ENCODE measurements at regions of chr2 and their contacts with region 1.

Region 1: DNA sequence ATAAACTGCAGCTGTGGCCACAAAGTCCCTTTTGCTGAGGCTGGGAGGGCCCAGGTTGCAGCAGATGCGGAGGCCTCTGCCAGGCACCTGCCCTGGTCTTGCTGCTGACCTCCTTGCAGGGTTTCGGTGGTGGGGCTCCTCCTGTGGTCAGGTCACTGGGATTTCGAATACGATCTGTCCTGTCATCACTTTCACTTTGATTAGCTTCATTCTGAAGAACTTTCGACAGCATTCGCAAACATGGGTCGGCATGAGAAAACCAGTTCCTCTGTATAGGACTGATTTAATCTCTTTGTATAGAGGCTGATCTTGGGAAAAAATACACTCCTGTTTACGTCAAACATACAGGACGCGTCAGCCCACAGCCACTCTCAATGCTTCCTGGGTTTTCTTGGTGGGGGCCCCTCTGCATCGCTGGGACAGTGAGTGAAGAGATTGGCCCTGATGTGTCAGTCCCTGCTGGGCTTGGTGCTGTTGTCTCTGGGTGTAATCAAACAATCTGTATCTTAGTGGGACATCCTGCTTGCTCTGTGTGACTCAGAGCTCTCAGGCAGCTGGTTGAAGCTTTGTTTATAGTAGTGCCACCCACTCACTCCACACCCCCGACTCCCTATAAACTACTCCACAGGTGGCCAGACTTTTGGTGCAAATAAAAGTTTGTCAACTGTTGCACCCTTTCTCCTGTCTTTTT is 209.4 kb upstream of the CXCR4 start:
- DNase-seq: peak; percentile 91
- H3K4me3 Mint-ChIP-seq: peak overlapping the region; percentile 74
- H3K27ac Mint-ChIP-seq: peak overlapping the region; percentile 92
- H3K4me1 Mint-ChIP-seq: peaks cover 49% of the 10 kb centered on the region
- H3K27me3 Mint-ChIP-seq: no peaks in the 10 kb centered on the region

Region 2: DNA sequence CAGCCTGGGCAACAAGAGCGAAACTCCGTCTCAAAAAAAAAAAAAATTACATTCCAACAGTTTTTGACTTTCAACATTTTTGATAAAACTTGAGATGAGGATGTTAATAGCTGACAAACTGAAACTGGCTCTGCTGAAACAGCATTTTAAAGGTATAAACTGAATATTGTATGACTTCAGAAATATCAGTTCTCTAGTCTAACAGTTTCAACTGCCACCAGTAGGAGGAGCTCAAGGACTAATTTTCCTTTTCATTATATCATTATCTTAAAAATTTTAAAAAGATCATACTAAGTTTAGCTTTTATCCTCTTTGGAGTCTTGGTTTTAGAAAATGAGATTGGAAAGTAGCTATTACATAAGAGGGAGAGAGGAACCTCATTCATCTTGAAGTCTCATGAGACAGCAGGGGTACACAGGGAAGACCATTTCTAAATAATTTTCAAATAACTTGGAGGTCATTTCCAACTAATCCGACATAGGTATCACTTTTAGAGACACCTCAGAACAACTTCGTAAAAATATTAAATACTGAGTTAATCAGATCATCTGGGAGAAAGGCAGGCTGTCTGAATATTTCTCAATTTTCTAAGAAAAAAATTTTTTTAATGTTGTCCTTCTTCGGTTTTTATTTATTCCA is 413.5 kb before region 1 on chr2:
- intact Hi-C with region 1: loop called (anchors 5 kb)
- DNase-seq: peak; percentile 86
- H3K4me3 Mint-ChIP-seq: no peak overlapping the region
- H3K27ac Mint-ChIP-seq: no peak overlapping the region
- H3K4me1 Mint-ChIP-seq: peaks cover 18% of the 10 kb centered on the region
- H3K27me3 Mint-ChIP-seq: no peaks in the 10 kb centered on the region

Region 3: GRCh38 chr2:136238286-136239078 is 88.8 kb before region 1 on chr2:
- intact Hi-C with region 1: loop called (anchors 1 kb)
- DNase-seq: peak; percentile 81
- H3K4me3 Mint-ChIP-seq: peak overlapping the region; percentile 43
- H3K27ac Mint-ChIP-seq: peak overlapping the region; percentile 89
- H3K4me1 Mint-ChIP-seq: peaks cover 45% of the 10 kb centered on the region
- H3K27me3 Mint-ChIP-seq: no peaks in the 10 kb centered on the region

Region 4: GRCh38 chr2:136310797-136311603 is 16.3 kb before region 1 on chr2:
- intact Hi-C with region 1: loop called (anchors 1 kb)
- DNase-seq: no peak
- H3K4me3 Mint-ChIP-seq: peak overlapping the region; percentile 30
- H3K27ac Mint-ChIP-seq: peak overlapping the region; percentile 86
- H3K4me1 Mint-ChIP-seq: peaks cover 22% of the 10 kb centered on the region
- H3K27me3 Mint-ChIP-seq: no peaks in the 10 kb centered on the region

Region 5: GRCh38 chr2:136344339-136344738 is 17.0 kb after region 1 on chr2:
- intact Hi-C with region 1: no loop called
- DNase-seq: peak; percentile 55
- H3K4me3 Mint-ChIP-seq: no peak overlapping the region
- H3K27ac Mint-ChIP-seq: no peak overlapping the region
- H3K4me1 Mint-ChIP-seq: no peaks in the 10 kb centered on the region
- H3K27me3 Mint-ChIP-seq: no peaks in the 10 kb centered on the region

Region 6: DNA sequence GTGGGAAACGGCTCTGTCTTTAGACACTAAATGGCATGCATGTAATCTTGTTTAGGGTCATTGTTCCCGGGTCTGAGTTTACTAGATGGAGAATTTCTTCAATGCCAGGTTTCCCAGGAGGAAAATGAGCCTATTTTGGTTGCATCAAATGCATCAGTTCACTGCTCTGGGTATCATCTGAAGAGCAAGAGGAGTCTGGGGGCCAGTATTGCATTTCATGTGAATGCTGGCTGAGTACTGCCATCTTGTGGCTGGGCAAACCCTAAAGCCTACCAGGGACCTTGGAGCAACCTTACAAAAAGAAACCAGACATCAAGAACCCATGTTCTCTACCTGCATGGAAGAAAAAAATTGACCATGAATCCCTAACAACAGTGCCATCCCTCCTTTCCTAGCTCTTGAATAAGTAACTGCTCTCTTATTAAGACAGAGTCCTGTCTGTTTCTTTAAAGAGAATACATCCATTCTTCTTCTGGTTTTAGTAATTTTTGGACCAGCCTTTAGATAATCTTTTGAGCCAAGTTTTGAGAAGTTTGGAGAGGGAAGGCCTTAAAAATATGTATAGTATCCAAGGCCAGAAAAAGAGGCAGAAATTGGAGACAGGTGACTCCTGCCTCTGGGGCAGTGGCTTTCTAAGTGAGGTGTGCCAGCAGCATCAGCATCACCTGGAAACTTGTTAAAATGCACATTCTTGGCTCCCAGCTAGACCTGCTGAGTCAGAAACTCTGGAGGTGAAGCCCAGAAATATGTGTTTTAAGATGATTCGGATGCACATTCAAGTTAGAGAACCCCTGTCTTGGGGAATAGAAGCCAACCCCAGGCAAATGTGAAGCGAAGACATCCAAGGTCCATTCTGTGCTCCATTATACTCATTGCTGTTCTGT is 51.6 kb after region 1 on chr2:
- intact Hi-C with region 1: loop called (anchors 1 kb)
- DNase-seq: peak; percentile 93
- H3K4me3 Mint-ChIP-seq: no peak overlapping the region
- H3K27ac Mint-ChIP-seq: no peak overlapping the region
- H3K4me1 Mint-ChIP-seq: peaks cover 86% of the 10 kb centered on the region
- H3K27me3 Mint-ChIP-seq: no peaks in the 10 kb centered on the region

Region 7: DNA sequence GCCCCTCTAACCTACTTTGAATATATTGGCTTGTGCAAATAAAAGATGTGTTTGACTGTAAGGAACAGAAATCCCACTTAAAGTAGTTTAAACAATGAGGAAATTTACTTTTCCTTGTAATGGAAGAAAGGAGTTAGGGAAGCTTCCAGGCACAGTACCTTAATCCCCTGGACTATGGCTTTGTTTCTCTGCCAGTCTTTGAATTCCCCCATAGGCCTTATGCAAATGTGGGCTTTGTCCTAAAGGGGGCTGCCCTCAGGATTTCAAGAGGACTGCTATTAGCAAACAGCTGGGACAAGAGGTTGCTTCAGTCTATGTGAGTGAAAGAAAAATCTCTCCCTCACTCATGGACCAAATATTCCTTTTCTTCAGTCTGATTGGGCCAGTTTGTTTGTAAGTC is 182.9 kb after region 1 on chr2:
- intact Hi-C with region 1: no loop called
- DNase-seq: no peak
- H3K4me3 Mint-ChIP-seq: no peak overlapping the region
- H3K27ac Mint-ChIP-seq: no peak overlapping the region
- H3K4me1 Mint-ChIP-seq: no peaks in the 10 kb centered on the region
- H3K27me3 Mint-ChIP-seq: peaks cover 2% of the 10 kb centered on the region